ENCODE measurements at regions of chr3 and their contacts with region 1.

Region 1: GRCh38 chr3:72818092-72818773 is 30.0 kb downstream of the SHQ1 start:
- DNase-seq: no peak
- ATAC-seq: no peak
- H3K4me3 Mint-ChIP-seq: no peak overlapping the region
- H3K27ac Mint-ChIP-seq: peak overlapping the region; percentile 38
- H3K4me1 Mint-ChIP-seq: peaks cover 25% of the 10 kb centered on the region
- H3K27me3 Mint-ChIP-seq: no peaks in the 10 kb centered on the region

Region 2: DNA sequence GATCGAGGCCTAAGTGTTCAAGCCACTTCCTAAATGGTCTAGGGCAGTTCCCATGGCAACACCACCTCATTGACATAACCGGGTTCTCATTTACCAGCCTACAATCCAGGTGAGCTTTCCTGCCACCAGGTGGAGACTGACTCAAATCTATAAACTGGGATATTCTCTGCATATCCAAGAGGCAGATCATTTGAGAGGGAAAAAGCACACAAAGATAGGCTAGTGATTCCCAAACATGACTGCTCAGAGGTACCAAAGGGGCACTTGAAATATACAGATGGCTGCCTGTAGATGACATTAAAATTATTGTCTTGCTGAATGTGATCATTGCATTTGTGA is 892.0 kb before region 1 on chr3:
- CTCF ChIA-PET with region 1: interaction called, 7 read pairs
- POLR2A ChIA-PET with region 1: no interaction called
- intact Hi-C with region 1: loop called in 1 of 2 experiments (anchors 5 kb)
- DNase-seq: peak; percentile 48
- ATAC-seq: peak; percentile 12
- H3K4me3 Mint-ChIP-seq: no peak overlapping the region
- H3K27ac Mint-ChIP-seq: no peak overlapping the region
- H3K4me1 Mint-ChIP-seq: peaks cover 3% of the 10 kb centered on the region
- H3K27me3 Mint-ChIP-seq: no peaks in the 10 kb centered on the region

Region 3: DNA sequence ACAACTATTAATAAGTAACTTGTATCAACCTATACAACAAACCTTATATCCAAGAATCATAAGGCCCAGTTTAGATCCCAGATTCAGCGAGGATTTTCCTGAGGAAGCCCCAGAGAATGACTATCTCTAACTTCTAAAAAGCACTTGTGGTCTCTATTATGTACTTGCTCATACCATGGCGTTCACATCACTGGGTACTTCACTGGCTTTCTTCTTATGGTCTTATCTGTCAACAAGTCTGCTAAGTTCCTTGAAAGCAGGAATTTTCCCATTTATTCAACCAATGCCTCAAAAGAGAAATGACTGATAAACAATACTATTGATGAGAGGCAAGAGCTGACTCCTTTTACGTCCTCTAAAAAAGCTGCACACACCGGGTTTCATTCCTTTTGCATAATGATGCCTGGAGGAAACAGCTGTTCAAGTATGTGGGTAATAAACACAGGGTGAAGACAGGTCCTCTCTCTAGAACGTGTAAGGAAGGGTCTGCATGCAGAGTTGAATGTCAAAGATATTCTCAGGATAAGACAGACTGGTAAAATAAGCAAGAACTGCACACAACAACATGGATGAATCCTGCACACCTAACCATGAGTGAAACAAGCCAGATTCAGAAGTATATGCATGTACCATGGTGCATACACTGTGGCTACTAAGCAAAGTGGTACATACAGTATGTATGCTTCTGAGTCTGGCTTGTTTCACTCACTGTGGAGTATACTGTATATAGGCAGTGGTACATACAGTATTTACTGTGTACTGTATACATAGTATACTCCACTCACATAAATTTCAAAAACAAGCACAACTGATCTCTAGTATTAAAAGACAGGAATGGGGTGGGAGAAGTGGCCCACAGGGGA is 378.7 kb before region 1 on chr3:
- CTCF ChIA-PET with region 1: no interaction called
- POLR2A ChIA-PET with region 1: no interaction called
- intact Hi-C with region 1: loop called in 1 of 2 experiments (anchors 5 kb)
- DNase-seq: no peak
- ATAC-seq: no peak
- H3K4me3 Mint-ChIP-seq: no peak overlapping the region
- H3K27ac Mint-ChIP-seq: no peak overlapping the region
- H3K4me1 Mint-ChIP-seq: peaks cover 85% of the 10 kb centered on the region
- H3K27me3 Mint-ChIP-seq: no peaks in the 10 kb centered on the region

Region 4: DNA sequence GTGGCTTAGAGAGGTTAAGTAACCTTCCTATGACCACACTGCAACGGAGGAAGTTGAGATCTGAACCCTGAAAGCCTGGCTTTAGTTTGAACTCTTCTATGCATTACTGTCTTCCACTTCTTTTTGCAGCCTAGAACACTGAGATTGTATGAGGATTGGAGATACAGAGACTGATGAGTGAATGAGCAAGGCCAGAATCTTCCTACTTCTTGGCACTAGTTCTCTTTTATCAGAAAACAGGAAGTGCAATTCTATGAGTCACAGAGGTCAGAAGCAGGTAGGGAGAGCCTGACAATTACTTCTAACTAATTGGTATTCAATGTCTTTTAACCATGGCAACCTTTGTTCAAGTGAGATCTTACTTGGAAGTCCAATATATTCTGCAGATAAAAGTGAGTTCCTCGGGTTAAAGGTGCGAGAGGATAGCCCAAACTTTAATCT is 189.0 kb before region 1 on chr3:
- CTCF ChIA-PET with region 1: no interaction called
- POLR2A ChIA-PET with region 1: no interaction called
- intact Hi-C with region 1: loop called in 1 of 2 experiments (anchors 10 kb)
- DNase-seq: no peak
- ATAC-seq: peak; percentile 67
- H3K4me3 Mint-ChIP-seq: no peak overlapping the region
- H3K27ac Mint-ChIP-seq: peak overlapping the region; percentile 79
- H3K4me1 Mint-ChIP-seq: peaks cover 60% of the 10 kb centered on the region
- H3K27me3 Mint-ChIP-seq: no peaks in the 10 kb centered on the region

Region 5: DNA sequence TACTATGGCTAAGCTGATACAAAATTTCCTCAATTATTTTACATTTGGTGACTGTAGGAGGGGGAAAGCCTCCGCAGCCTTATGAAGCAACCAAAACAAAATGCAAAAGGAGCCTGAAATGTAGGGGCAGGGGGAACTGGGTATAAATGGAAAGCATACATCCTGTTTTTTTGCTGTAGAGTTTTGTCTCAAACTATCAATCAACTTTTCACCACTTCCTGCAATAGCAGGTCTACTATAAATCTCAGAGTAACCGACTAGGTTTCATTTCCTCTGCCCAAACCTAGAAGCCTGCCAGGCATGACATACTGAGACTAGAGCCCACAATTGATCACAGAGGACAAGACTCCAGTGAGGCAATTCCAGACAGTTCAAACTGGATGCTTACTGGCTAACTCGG is 61.3 kb before region 1 on chr3:
- CTCF ChIA-PET with region 1: interaction called, 5 read pairs
- POLR2A ChIA-PET with region 1: no interaction called
- intact Hi-C with region 1: loop called (anchors 5 kb)
- DNase-seq: peak; percentile 63
- ATAC-seq: peak; percentile 98
- H3K4me3 Mint-ChIP-seq: no peak overlapping the region
- H3K27ac Mint-ChIP-seq: peak overlapping the region; percentile 89
- H3K4me1 Mint-ChIP-seq: peaks cover 66% of the 10 kb centered on the region
- H3K27me3 Mint-ChIP-seq: no peaks in the 10 kb centered on the region

Measured in activated CD4-positive, alpha-beta T cell treated with anti-CD3 and anti-CD28 coated beads for 36 hours (primary cell).